ENCODE measurements at regions of chr1 and their contacts with region 1.

Region 1: DNA sequence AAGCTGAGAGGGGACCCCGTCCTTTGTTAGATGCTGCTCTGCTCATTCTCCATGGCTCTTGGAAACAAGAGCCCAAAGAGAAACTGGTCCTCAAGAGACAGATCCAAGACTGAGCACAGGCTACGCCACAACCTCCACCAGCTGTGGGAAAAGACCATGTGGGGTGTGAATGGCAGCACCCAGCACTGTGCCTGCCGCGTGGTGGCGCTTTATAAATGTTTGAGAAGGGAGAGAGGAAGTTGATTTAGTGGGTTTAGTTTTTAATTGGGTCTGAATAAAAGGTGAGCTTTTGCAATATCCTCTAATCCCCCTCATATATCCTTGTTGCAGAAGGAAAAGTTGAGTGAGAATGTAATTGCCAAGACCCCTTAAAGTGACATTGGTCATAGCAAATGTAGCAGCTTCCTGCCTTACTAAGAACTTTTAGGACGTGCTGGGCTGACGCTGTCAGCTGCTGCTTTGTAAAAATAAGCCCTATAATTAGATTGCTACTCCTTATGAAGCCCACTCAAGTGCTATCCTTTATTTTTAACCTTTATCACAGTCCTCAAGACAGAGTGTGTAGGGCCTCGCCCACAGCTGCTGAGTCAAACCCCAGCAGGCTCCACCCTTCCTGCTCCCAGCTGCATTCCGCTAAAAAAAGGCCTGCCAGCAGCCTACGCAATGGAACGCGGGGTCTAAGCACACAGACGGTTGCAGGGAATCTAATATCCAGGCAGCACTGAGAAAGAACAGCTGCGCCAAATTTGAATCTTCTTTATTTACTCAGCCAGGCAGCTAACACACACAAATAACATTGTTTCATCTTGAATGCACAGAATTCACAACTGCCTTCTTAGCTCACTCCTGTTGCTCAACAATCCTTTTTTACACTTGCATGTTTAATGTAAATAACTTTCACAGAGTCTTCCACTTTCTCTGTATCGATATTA is 47.4 kb upstream of the PRDX6 start:
- DNase-seq: peak; percentile 92
- H3K4me3 ChIP-seq: peak overlapping the region; percentile 10
- H3K27ac ChIP-seq: peak overlapping the region; percentile 9 to 86
- H3K4me1 ChIP-seq: peaks cover 17% of the 10 kb centered on the region
- H3K27me3 ChIP-seq: no peaks in the 10 kb centered on the region
- CTCF ChIP-seq: peak; percentile 34 to 65 (median 46)
- POLR2A ChIP-seq: no peak

Region 2: GRCh38 chr1:173342736-173343135 is 87.0 kb before region 1 on chr1:
- intact Hi-C with region 1: no loop called
- DNase-seq: no peak
- H3K4me3 ChIP-seq: no peak overlapping the region
- H3K27ac ChIP-seq: no peak overlapping the region
- H3K4me1 ChIP-seq: no peaks in the 10 kb centered on the region
- H3K27me3 ChIP-seq: no peaks in the 10 kb centered on the region
- CTCF ChIP-seq: no peak
- POLR2A ChIP-seq: no peak

Region 3: DNA sequence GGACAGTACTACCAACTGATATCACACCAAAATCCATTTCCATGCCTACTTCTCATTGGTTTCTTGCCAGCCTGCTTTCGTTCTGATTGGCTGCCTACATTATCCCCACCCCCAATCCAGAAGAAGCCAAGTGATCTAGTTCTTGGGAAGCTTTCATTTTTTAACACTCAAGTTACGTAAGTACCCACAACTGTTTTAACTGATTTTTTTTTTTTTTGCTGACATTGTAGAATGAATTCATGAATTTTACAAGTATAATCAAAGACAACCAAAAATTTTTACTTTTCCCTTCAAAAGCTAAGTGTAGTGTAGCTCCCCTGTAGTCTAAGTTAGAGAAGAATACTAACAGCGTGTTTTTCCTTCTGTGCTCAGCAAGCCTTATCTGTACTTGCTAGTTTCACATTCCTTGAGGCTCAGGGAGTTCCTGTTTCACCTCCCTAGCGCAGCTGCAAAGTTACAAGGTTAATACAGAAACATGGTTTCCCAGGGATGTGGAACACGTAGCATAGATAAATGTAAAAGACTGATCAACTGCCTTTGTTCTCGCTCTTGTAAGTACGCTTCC is 173.4 kb after region 1 on chr1 and contains the start of gene SLC9C2:
- intact Hi-C with region 1: no loop called
- DNase-seq: peak; percentile 75
- H3K4me3 ChIP-seq: peak within 1 kb of the TSS; percentile 17 to 36
- H3K27ac ChIP-seq: peak within 1 kb of the TSS; percentile 64 to 83
- H3K4me1 ChIP-seq: no peaks in the 10 kb centered on the region
- H3K27me3 ChIP-seq: no peaks in the 10 kb centered on the region
- CTCF ChIP-seq: no peak
- POLR2A ChIP-seq: no peak
- total RNA-seq, gene SLC9C2: 15.8 to 15.9 TPM

Region 4: DNA sequence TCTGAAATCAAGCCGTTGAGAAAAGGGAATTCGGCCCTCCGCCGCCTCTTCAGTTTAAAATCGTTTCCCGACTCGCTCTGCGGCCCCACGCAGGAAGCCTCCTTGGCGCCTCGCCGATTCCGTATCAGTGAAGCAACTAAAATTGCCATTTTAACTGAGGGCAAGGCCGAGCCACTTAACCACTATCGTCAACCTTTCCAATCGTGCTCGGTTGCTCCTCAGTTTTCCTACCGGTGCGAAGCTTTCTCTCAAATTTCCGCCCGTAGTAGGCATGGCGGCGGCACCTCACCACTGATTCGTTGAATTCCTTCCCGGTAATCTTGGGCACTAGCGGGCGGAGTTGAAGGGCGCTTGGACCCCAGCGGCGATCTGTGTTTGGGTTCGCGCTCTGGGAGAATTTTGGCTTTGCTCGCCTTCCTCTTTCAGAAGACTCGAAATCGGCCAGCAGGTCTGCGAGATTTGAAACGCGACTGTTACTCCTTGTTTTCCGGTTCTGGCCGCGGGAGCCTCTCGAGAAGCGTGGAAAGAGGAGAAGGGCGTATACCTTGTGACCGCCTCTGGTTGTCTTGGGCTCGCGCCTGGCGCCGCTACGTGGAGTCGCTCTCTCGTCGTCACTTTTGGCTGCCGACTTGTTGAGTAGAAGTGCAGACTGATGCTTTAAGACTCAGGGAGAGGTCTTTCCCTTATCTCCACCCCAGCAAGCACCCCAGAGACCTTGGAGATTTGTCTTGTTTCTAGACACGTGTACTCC is 394.8 kb after region 1 on chr1 and contains the starts of genes CENPL and DARS2:
- intact Hi-C with region 1: loop called (anchors 10 kb)
- DNase-seq: peak; percentile 98
- H3K4me3 ChIP-seq: peak within 1 kb of the TSS; percentile 68 to 78
- H3K27ac ChIP-seq: peak within 1 kb of the TSS; percentile 85 to 94
- H3K4me1 ChIP-seq: peaks cover 4% of the 10 kb centered on the region
- H3K27me3 ChIP-seq: no peaks in the 10 kb centered on the region
- CTCF ChIP-seq: peak in 1 of 3 experiments; percentile 18
- POLR2A ChIP-seq: no peak
- total RNA-seq, gene CENPL: 13.2 to 20.5 TPM
- total RNA-seq, gene DARS2: 16.8 to 21.4 TPM

Measured in testis (tissue), 5 donors.